Caco-2 (cell line): ENCODE measurements at regions of chr5 and their contacts with region 1.

Region 1: GRCh38 chr5:60960591-60960990 is 15.6 kb downstream of the NDUFAF2 start:
- DNase-seq: no peak
- H3K4me3 ChIP-seq: no peak overlapping the region
- H3K4me3 Mint-ChIP-seq: no peak overlapping the region
- H3K27ac Mint-ChIP-seq: no peak overlapping the region
- H3K4me1 ChIP-seq: no peaks in the 10 kb centered on the region
- H3K4me1 Mint-ChIP-seq: no peaks in the 10 kb centered on the region
- H3K27me3 ChIP-seq: no peaks in the 10 kb centered on the region
- H3K27me3 Mint-ChIP-seq: no peaks in the 10 kb centered on the region
- CTCF ChIP-seq: peak; percentile 56 to 70

Region 2: GRCh38 chr5:60870857-60871256 is 89.7 kb before region 1 on chr5:
- CTCF ChIA-PET with region 1: no interaction called
- POLR2A ChIA-PET with region 1: no interaction called
- intact Hi-C with region 1: no loop called
- DNase-seq: no peak
- H3K4me3 ChIP-seq: no peak overlapping the region
- H3K4me3 Mint-ChIP-seq: no peak overlapping the region
- H3K27ac Mint-ChIP-seq: no peak overlapping the region
- H3K4me1 ChIP-seq: no peaks in the 10 kb centered on the region
- H3K4me1 Mint-ChIP-seq: no peaks in the 10 kb centered on the region
- H3K27me3 ChIP-seq: no peaks in the 10 kb centered on the region
- H3K27me3 Mint-ChIP-seq: no peaks in the 10 kb centered on the region
- CTCF ChIP-seq: no peak

Region 3: GRCh38 chr5:61050292-61050691 is 89.7 kb after region 1 on chr5:
- CTCF ChIA-PET with region 1: no interaction called
- POLR2A ChIA-PET with region 1: no interaction called
- intact Hi-C with region 1: loop called (anchors 1 kb)
- DNase-seq: no peak
- H3K4me3 ChIP-seq: no peak overlapping the region
- H3K4me3 Mint-ChIP-seq: no peak overlapping the region
- H3K27ac Mint-ChIP-seq: no peak overlapping the region
- H3K4me1 ChIP-seq: peaks cover 31% of the 10 kb centered on the region
- H3K4me1 Mint-ChIP-seq: peaks cover 19% of the 10 kb centered on the region
- H3K27me3 ChIP-seq: no peaks in the 10 kb centered on the region
- H3K27me3 Mint-ChIP-seq: no peaks in the 10 kb centered on the region
- CTCF ChIP-seq: no peak

Region 4: DNA sequence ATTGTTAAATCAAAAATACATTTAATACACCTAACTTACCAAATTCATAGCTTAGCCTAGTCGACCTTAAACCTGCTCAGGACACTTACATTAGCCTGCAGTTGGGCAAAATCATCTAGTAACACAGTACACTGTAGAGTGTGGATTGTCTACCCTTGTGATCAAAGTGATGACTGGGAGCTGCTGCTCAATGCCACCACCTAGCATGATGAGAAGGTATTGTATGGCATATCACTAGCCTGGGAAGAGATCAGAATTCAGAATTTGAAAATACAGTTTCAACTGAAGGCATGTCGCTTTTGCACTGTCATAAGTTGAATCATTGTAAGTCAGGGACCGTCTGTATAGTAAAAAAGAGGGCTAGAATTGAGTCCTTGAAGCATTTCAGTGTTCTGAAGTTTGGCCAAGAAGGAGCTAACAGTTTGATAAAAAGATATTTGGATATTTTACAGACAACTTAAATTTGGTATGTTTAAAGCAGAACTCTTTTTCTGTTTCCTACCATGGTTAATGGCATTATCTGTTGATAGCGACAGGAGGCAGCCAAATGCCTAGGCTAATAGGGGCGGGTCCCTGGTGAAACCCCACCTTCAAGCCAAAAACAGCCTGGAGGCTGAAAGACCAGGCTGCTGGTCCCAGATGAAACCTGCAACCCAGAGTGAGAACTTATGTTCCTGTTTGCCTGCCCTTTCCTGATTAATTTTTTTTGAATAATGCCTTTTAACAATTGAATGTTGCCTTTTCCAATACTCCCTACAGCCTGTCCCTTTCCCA is 178.7 kb after region 1 on chr5:
- CTCF ChIA-PET with region 1: interaction called, 3 read pairs
- POLR2A ChIA-PET with region 1: no interaction called
- intact Hi-C with region 1: loop called (anchors 10 kb)
- DNase-seq: peak in 1 of 2 experiments; percentile 20
- H3K4me3 ChIP-seq: no peak overlapping the region
- H3K4me3 Mint-ChIP-seq: no peak overlapping the region
- H3K27ac Mint-ChIP-seq: no peak overlapping the region
- H3K4me1 ChIP-seq: no peaks in the 10 kb centered on the region
- H3K4me1 Mint-ChIP-seq: no peaks in the 10 kb centered on the region
- H3K27me3 ChIP-seq: no peaks in the 10 kb centered on the region
- H3K27me3 Mint-ChIP-seq: no peaks in the 10 kb centered on the region
- CTCF ChIP-seq: peak; percentile 42 to 50

Region 5: DNA sequence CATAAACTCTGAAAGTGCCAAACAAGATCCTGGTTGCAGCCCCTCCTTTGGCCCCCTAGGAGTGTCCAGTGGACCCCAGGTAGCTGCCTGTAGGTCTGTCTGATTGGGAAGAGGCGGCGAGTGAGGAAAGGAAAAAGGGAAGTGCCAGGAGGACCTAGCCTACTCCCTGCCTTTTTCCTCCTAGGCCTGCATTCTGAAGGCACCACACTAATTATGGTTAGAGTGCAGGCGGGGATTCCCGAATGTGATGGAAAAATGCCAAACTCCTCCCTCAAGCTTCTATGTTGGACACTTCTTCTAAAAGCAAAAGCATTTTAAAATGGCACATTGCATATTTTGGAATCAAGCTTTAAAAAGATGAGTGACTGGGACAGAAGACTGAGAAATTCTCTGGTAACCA is 284.9 kb after region 1 on chr5:
- CTCF ChIA-PET with region 1: no interaction called
- POLR2A ChIA-PET with region 1: no interaction called
- intact Hi-C with region 1: no loop called
- DNase-seq: no peak
- H3K4me3 ChIP-seq: no peak overlapping the region
- H3K4me3 Mint-ChIP-seq: no peak overlapping the region
- H3K27ac Mint-ChIP-seq: no peak overlapping the region
- H3K4me1 ChIP-seq: no peaks in the 10 kb centered on the region
- H3K4me1 Mint-ChIP-seq: no peaks in the 10 kb centered on the region
- H3K27me3 ChIP-seq: no peaks in the 10 kb centered on the region
- H3K27me3 Mint-ChIP-seq: no peaks in the 10 kb centered on the region
- CTCF ChIP-seq: no peak

Region 6: DNA sequence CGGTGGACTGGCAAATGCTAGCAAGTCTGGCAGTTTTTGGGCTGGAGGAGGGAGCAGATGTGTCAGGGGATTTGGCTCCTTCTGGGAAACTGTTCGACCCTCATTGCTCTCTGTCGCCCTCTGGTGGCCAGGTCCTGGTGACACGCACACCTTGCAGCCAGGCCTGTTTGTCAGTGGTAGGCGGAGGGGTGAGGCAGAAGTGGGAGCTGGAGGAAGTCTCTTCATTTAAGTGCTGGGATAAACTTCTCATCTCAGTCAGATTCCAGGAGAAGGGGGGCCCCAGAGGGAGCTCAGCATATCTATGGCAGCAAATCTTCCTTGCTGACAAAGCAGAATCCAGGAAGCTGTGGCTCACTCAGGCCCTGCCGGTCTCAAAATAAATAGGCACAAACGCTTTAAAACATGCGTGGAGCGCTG is 698.0 kb after region 1 on chr5:
- CTCF ChIA-PET with region 1: no interaction called
- POLR2A ChIA-PET with region 1: no interaction called
- intact Hi-C with region 1: loop called (anchors 5 kb)
- DNase-seq: peak; percentile 78 to 87
- H3K4me3 ChIP-seq: no peak overlapping the region
- H3K4me3 Mint-ChIP-seq: no peak overlapping the region
- H3K27ac Mint-ChIP-seq: no peak overlapping the region
- H3K4me1 ChIP-seq: no peaks in the 10 kb centered on the region
- H3K4me1 Mint-ChIP-seq: no peaks in the 10 kb centered on the region
- H3K27me3 ChIP-seq: no peaks in the 10 kb centered on the region
- H3K27me3 Mint-ChIP-seq: peaks cover 16% of the 10 kb centered on the region
- CTCF ChIP-seq: peak; percentile 96

Region 7: DNA sequence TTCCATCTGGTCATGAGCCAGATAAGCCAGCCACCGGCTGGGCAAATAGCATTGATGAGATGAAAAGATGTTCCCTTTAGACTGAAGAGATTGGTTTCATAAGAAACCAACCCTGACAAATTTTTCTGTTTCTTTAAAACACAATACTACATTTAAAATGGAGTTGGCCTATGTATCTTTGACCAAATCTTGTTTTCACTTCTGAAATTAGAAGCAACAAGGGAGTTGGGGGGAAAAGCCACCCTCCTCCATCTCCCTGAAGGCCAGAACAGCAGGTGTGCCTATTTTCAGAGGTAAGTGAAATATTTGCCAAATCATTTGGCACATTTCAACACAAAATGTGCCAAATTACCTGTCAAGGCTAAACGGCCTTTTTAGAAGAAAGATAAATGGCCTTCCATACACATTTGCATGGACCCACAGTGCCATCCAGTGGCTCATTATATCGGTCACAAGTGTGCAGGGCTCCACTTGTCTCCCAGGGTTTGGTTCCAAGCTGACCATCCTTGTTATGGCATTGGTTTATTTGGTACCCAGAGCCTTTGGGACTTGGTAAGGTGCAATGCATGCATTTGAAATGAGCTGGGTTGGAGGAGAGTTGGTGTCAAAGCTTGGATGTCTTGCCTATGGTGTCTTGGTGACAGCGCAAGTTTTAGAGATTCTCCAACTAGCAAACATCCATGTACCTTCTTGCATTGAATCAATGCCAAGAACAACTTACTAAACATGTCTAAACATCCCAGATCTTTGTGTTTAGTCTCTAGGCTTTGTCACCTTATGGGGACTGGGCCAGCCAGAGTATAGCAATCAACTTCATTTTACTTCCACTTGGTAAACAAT is 973.4 kb after region 1 on chr5:
- CTCF ChIA-PET with region 1: no interaction called
- POLR2A ChIA-PET with region 1: no interaction called
- intact Hi-C with region 1: loop called (anchors 5 kb)
- DNase-seq: peak; percentile 46 to 55
- H3K4me3 ChIP-seq: no peak overlapping the region
- H3K4me3 Mint-ChIP-seq: no peak overlapping the region
- H3K27ac Mint-ChIP-seq: no peak overlapping the region
- H3K4me1 ChIP-seq: no peaks in the 10 kb centered on the region
- H3K4me1 Mint-ChIP-seq: no peaks in the 10 kb centered on the region
- H3K27me3 ChIP-seq: no peaks in the 10 kb centered on the region
- H3K27me3 Mint-ChIP-seq: peaks cover 5% of the 10 kb centered on the region
- CTCF ChIP-seq: peak; percentile 48 to 55